Mucosa of descending colon (tissue), 3 donors: ENCODE measurements at regions of chr1 and their contacts with region 1.

Region 1: GRCh38 chr1:210301615-210302000 is 27.1 kb upstream of the HHAT start:
- DNase-seq: no peak
- ATAC-seq: no peak
- H3K4me3 ChIP-seq: no peak overlapping the region
- H3K4me1 ChIP-seq: no peaks in the 10 kb centered on the region
- CTCF ChIP-seq: no peak

Region 2: GRCh38 chr1:209860293-209860881 is 441.2 kb before region 1 on chr1:
- intact Hi-C with region 1: loop called in 1 of 2 experiments (anchors 10 kb)
- DNase-seq: peak; percentile 58 to 84 (median 64)
- ATAC-seq: peak; percentile 84
- H3K4me3 ChIP-seq: no peak overlapping the region
- H3K4me1 ChIP-seq: no peaks in the 10 kb centered on the region
- CTCF ChIP-seq: peak; percentile 71

Region 3: GRCh38 chr1:210214573-210215409 is 86.8 kb before region 1 on chr1:
- intact Hi-C with region 1: loop called in 1 of 2 experiments (anchors 10 kb)
- DNase-seq: peak in 1 of 3 donors; percentile 17
- ATAC-seq: peak; percentile 76
- H3K4me3 ChIP-seq: no peak overlapping the region
- H3K4me1 ChIP-seq: no peaks in the 10 kb centered on the region
- CTCF ChIP-seq: no peak